ENCODE measurements at regions of chr2 and their contacts with region 1.

Region 1: GRCh38 chr2:113282747-113283533 is 4.2 kb upstream of the PAX8 start:
- DNase-seq: peak; percentile 81
- H3K4me3 ChIP-seq: no peak overlapping the region
- H3K27ac ChIP-seq: peak overlapping the region; percentile 99
- H3K4me1 ChIP-seq: peaks cover 47% of the 10 kb centered on the region
- H3K27me3 ChIP-seq: no peaks in the 10 kb centered on the region
- CTCF ChIP-seq: peak; percentile 14 to 47

Region 2: GRCh38 chr2:113116100-113116958 is 166.6 kb before region 1 on chr2:
- CTCF ChIA-PET with region 1: no interaction called
- dilution Hi-C with region 1: no loop called
- in situ Hi-C with region 1: no loop called
- intact Hi-C with region 1: no loop called
- DNase-seq: peak; percentile 69
- H3K4me3 ChIP-seq: no peak overlapping the region
- H3K27ac ChIP-seq: peak overlapping the region; percentile 93
- H3K4me1 ChIP-seq: peaks cover 28% of the 10 kb centered on the region
- H3K27me3 ChIP-seq: no peaks in the 10 kb centered on the region
- CTCF ChIP-seq: no peak

Region 3: DNA sequence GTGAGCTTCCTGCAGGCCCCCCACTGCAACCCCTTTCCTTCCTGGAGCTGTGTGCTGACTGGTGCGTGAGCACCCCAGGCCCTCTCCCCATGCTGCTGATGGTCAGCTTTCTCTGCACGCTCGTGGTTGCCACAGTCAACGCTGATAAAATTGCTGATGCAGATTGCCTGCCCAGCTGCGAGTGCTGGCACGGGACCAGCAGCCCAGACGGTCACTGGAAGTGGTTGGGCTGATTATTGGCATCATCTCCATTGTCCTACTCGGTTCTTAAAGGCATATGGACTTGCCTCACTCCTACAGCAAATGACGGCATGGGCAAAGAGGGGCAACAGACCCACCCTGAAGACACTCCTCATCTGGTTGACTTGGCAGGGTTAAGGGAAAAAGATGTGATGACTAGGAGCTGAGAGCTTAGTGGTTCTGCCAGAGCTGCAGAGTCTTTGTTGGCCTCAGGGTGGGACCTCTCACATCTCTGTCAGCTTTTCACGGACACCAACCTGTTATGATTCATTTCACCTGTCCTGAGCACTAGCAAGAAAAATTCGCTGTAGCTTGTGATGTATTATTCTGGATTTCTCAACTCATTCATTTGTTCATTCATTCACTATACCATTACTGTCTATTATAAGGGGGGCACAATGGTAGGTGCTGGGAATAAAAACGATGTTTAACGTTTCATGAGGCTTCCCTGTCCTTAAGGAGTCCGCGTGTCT is 42.6 kb before region 1 on chr2:
- CTCF ChIA-PET with region 1: interaction called, 3 read pairs
- dilution Hi-C with region 1: no loop called
- in situ Hi-C with region 1: no loop called
- intact Hi-C with region 1: loop called (anchors 1 kb)
- DNase-seq: peak; percentile 95
- H3K4me3 ChIP-seq: peak overlapping the region in 2 of 3 experiments; percentile 2 to 12
- H3K27ac ChIP-seq: peak overlapping the region; percentile 95
- H3K4me1 ChIP-seq: peaks cover 29% of the 10 kb centered on the region
- H3K27me3 ChIP-seq: no peaks in the 10 kb centered on the region
- CTCF ChIP-seq: peak; percentile 16 to 19

Region 4: DNA sequence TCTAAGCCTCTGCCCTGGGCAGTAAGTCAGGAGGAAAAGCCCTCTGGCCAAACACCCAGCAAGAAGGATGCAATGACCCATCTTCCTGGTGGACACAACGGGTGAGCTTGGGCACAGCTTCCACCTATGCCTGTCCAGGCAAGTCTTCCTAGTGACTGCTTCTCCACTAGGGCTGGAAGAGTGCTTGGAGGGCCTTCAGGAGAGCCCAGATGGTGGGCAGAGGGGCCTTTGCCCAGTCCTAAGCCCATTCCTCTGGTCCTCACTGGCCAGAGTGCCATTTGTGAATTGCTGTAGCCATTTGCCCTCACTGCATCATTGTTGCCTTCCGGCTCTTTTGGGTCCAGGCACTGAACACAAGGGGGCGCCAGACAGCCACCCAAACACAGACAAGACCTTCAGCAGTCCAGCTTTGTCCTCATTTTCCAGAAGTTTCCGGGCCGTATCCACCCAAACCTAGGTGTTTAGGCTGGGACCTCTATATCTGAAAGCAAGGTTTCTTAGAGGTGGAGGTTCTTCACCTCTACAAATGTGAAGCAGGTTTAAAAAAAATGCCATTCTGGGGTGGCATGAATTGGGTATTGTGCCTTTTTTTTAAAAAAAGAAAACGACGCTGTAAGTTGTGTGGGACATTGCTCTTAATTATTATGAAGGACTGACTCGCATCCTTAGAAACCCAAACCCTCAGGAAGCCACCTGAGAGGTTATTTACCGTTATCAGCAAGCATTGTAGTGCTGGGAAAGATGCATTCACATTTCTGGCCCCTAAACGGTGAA is 33.8 kb before region 1 on chr2:
- CTCF ChIA-PET with region 1: interaction called, 3 read pairs
- dilution Hi-C with region 1: no loop called
- in situ Hi-C with region 1: no loop called
- intact Hi-C with region 1: loop called (anchors 1 kb)
- DNase-seq: peak; percentile 69
- H3K4me3 ChIP-seq: no peak overlapping the region
- H3K27ac ChIP-seq: no peak overlapping the region
- H3K4me1 ChIP-seq: peaks cover 29% of the 10 kb centered on the region
- H3K27me3 ChIP-seq: no peaks in the 10 kb centered on the region
- CTCF ChIP-seq: peak; percentile 91 to 97

Region 5: GRCh38 chr2:113304702-113305101 is 21.8 kb after region 1 on chr2:
- CTCF ChIA-PET with region 1: no interaction called
- dilution Hi-C with region 1: no loop called
- in situ Hi-C with region 1: no loop called
- intact Hi-C with region 1: loop called (anchors 1 kb)
- DNase-seq: no peak
- H3K4me3 ChIP-seq: no peak overlapping the region
- H3K27ac ChIP-seq: no peak overlapping the region
- H3K4me1 ChIP-seq: peaks cover 16% of the 10 kb centered on the region
- H3K27me3 ChIP-seq: no peaks in the 10 kb centered on the region
- CTCF ChIP-seq: no peak

Region 6: DNA sequence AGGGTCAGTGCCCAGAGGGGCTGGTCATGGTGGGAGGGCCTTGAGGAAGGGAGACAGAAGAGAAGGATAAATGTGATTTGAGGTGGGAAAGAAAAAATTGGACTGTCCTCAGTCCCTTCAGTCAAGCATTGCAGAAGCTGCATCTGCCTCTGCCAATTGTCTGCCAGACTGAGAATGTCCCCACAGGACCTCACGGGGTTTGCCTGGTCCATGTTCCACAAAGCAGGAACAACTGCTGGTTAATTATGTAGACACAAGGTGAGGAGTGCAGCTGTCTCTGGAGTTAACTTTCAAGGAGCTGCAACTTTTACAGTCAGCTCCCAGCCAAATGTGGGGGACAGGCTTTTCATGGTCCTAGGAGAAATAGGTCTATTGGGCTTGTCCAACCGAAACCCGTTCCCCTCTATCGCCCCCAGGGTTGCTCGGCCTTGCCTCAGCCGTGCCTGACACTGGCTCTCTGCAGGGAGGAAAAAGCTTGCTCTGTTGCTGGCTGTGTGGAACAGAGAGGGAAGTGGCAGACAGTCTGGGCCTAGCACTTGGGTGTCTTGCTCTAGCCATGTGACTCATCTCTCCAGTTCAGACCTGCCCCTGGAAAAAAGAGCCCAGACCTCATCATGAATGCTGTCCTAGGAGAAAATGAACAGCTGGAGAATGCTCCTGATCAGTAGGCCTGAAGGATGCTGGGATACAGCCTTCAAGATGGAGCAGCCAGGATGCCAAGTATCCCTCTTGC is 26.9 kb after region 1 on chr2:
- CTCF ChIA-PET with region 1: no interaction called
- dilution Hi-C with region 1: no loop called
- in situ Hi-C with region 1: no loop called
- intact Hi-C with region 1: loop called (anchors 1 kb)
- DNase-seq: peak; percentile 84
- H3K4me3 ChIP-seq: no peak overlapping the region
- H3K27ac ChIP-seq: peak overlapping the region; percentile 42
- H3K4me1 ChIP-seq: peaks cover 29% of the 10 kb centered on the region
- H3K27me3 ChIP-seq: no peaks in the 10 kb centered on the region
- CTCF ChIP-seq: no peak

Region 7: GRCh38 chr2:113324684-113325160 is 41.8 kb after region 1 on chr2:
- CTCF ChIA-PET with region 1: no interaction called
- dilution Hi-C with region 1: no loop called
- in situ Hi-C with region 1: no loop called
- intact Hi-C with region 1: loop called (anchors 1 kb)
- DNase-seq: peak; percentile 65
- H3K4me3 ChIP-seq: peak overlapping the region; percentile 56 to 86 (median 67)
- H3K27ac ChIP-seq: peak overlapping the region; percentile 86
- H3K4me1 ChIP-seq: peaks cover 45% of the 10 kb centered on the region
- H3K27me3 ChIP-seq: no peaks in the 10 kb centered on the region
- CTCF ChIP-seq: no peak

Region 8: DNA sequence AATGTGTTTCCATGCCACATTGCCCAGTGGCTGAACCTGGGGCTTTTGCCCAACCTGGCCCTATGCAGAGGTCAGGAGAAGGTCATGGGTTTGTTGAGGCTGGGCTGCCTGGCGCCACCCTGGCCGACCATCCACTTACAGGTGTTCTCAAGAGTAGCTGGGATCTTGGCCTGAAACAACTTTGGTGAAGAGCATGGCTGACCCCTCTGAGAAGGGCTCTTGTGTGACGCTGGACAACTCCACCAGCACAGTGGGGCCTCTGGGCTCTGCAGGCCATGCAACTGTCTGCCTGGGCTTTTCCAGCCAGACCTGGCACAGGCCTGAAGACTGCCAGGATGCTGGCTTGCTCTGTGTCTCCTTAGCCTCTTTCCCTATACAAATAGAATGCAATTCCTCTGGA is 78.1 kb after region 1 on chr2:
- CTCF ChIA-PET with region 1: no interaction called
- dilution Hi-C with region 1: no loop called
- in situ Hi-C with region 1: no loop called
- intact Hi-C with region 1: no loop called
- DNase-seq: no peak
- H3K4me3 ChIP-seq: no peak overlapping the region
- H3K27ac ChIP-seq: no peak overlapping the region
- H3K4me1 ChIP-seq: peaks cover 24% of the 10 kb centered on the region
- H3K27me3 ChIP-seq: no peaks in the 10 kb centered on the region
- CTCF ChIP-seq: no peak